ENCODE measurements at regions of chr1 and their contacts with region 1.

Region 1: GRCh38 chr1:30379684-30380624 is 343.4 kb downstream of the MATN1 start:
- DNase-seq: peak; percentile 63
- ATAC-seq: peak; percentile 51
- H3K4me3 Mint-ChIP-seq: no peak overlapping the region
- H3K27ac Mint-ChIP-seq: no peak overlapping the region
- H3K4me1 Mint-ChIP-seq: no peaks in the 10 kb centered on the region
- H3K27me3 Mint-ChIP-seq: peaks cover 4% of the 10 kb centered on the region

Region 2: DNA sequence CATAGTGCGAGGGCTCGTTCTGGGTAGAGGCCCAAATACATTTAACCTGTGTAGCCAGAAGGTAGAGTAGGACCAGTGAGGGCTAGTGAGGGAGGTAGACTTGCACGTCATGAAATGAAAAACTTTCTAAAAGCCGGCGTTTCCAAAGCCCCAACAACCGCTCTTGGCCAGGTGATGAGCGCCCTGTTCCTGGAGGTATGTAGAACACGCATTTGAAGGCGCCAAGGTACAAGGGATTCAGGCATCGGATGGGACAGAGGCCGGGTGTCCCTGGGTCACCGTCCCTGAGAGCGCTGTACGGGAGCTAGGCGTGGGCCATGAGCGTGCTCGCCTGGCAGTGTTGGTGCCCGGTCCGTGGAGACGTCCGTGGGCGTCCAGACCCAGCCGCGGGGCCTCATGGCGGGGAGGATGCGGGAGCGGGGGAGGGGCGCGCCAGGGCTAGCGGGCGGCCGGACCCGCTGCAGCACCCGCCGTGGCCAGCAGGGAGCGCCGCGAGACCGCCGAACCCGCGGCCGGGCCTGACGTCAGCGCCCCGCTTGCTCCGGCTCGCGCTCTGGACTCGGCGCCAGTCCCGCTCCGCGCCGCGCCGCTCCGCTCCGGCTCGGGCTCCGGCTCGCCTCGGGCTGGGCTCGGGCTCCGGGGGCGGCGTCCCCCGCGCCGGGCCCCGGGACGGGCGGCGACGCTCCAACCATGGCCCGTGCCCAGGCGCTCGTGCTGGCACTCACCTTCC is 1143.8 kb before region 1 on chr1 and contains the start of gene PTPRU:
- CTCF ChIA-PET with region 1: interaction called, 10 read pairs
- DNase-seq: peak; percentile 81
- ATAC-seq: peak; percentile 91
- H3K4me3 Mint-ChIP-seq: peak within 1 kb of the TSS; percentile 53
- H3K27ac Mint-ChIP-seq: peak within 1 kb of the TSS; percentile 1
- H3K4me1 Mint-ChIP-seq: peaks cover 22% of the 10 kb centered on the region
- H3K27me3 Mint-ChIP-seq: peaks cover 57% of the 10 kb centered on the region
- total RNA-seq, gene PTPRU: 0.47 to 0.64 TPM

Region 3: DNA sequence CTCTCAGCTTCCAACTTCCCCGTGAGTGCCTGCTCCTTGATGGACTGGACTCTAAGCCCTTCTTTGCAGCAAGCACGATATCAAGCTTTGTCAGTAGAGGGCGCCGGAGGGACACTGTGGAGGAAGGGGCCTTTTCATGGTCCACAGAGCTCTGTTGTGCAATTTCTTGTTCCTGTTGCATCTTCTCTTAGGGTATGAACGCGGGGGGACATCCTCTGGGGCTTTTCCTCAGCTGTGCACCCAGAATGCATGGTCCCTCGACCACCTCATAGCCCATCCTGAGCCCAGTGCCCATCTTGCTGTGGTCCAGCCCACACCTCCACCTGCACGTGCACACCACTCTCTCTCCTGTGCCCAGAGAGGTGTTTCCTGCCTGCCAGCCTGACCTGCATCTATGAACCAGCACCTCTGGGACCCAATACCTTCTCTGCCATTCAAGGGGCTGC is 586.8 kb before region 1 on chr1:
- CTCF ChIA-PET with region 1: interaction called, 20 read pairs
- DNase-seq: peak; percentile 79
- ATAC-seq: peak; percentile 49
- H3K4me3 Mint-ChIP-seq: no peak overlapping the region
- H3K27ac Mint-ChIP-seq: no peak overlapping the region
- H3K4me1 Mint-ChIP-seq: no peaks in the 10 kb centered on the region
- H3K27me3 Mint-ChIP-seq: no peaks in the 10 kb centered on the region

Region 4: DNA sequence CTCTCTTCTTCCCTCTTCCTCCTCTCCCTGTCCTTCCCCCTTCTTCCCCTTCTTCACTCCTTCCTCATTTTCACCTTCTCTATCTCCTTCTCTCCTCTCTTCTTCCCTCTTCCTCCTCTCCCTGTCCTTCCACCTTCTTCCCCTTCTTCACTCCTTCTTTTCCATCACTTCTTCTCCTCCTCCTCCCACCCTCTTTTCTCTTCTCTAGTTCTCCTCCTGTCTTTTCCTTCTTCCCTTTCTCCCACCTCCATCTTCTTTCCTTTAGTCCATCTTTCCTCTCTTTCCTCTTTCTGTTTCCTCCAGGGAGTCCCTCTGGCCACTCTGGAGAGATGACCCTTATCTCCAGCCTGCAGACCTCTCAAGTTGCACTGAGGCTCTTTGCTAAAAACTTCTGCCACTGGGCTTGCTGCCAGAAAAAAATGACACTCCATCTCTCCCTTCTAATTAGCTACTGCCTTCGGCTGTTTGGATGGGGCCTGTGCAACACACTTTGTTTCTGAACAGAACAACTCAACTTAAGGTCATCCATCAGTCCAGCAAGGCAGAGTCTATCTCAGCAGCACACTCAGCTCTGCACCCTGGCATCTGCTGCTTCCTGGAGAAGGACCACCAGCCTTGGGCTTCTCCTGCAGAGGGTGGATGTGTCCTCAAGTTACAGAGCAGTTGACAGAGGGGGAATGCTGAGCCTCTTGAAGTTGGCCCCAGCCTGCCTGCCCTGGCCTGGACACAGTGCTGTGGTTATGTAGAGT is 195.4 kb before region 1 on chr1:
- CTCF ChIA-PET with region 1: no interaction called
- DNase-seq: no peak
- ATAC-seq: no peak
- H3K4me3 Mint-ChIP-seq: no peak overlapping the region
- H3K27ac Mint-ChIP-seq: no peak overlapping the region
- H3K4me1 Mint-ChIP-seq: no peaks in the 10 kb centered on the region
- H3K27me3 Mint-ChIP-seq: no peaks in the 10 kb centered on the region

Measured in activated CD8-positive, alpha-beta memory T cell treated with anti-CD3 and anti-CD28 coated beads, Interleukin-2, amount 10 ng/mL, durations not matched to agents 7 days and 5 days (primary cell).